ENCODE measurements at regions of chr5 and their contacts with region 1.

Region 1: GRCh38 chr5:180470966-180471582 is 23.1 kb upstream of the CNOT6 start:
- DNase-seq: peak; percentile 59
- ATAC-seq: peak; percentile 98
- H3K4me3 ChIP-seq: no peak overlapping the region
- H3K27ac ChIP-seq: no peak overlapping the region
- H3K4me1 ChIP-seq: no peaks in the 10 kb centered on the region
- H3K27me3 ChIP-seq: peaks cover 11% of the 10 kb centered on the region
- CTCF ChIP-seq: peak; percentile 89
- POLR2A ChIP-seq: no peak
- RAD21 ChIP-seq: peak; percentile 93

Region 2: DNA sequence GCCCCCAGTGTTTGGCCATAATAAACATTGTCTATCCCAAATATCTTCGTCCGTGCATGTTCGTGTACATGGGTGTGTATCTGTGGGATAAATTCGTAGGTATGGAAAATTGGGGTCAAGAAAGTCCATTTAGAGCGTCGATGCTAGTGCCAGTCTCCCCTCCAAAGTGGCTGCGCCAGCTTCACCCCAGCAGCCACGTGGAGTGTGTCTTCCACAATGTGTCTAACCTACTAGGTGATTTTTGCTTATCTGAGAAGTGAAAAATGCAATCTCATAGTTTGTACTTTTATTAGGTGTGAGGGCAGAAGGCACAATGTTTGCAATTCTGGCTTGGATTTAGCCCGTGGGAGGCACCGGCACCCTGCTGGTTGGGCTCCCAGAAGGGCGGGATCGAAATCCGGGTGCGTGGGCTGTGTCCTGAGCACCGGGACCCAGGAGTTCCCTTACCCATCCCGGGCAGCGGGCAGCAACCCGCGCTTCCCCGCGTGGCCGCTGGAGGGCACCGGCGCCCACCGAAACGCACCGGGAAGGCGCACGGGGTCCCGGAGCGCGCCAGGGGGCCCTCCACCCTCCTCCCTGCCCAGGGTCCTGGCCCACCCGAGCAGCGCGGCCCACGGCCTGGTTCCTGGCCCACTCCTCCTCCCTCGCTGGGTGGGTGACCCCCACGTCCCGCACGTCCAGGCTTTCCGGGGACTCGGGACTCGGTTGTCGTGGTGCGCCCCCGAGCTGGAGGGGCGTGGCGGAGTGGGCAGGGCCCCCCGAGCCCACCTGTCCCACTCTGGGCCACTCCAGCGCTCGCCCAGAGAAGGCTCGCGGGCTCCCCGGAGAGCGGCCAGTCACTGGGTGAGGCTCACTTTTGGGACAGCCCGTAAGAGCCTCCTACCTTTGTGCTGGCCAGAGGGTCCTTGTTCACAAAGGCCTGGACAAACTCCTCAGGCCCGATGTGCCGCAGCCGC is 344.1 kb before region 1 on chr5:
- CTCF ChIA-PET with region 1: no interaction called
- POLR2A ChIA-PET with region 1: no interaction called
- dilution Hi-C with region 1: no loop called
- in situ Hi-C with region 1: loop called (anchors 25 kb)
- intact Hi-C with region 1: loop called (anchors 1 kb)
- DNase-seq: no peak
- ATAC-seq: peak; percentile 94
- H3K4me3 ChIP-seq: no peak overlapping the region
- H3K27ac ChIP-seq: no peak overlapping the region
- H3K4me1 ChIP-seq: no peaks in the 10 kb centered on the region; the same call in 1 of the 2 replicates
- H3K27me3 ChIP-seq: peaks cover 24% of the 10 kb centered on the region
- CTCF ChIP-seq: peak; percentile 73
- POLR2A ChIP-seq: no peak
- RAD21 ChIP-seq: peak; percentile 77

Region 3: GRCh38 chr5:180253036-180253824 is 217.8 kb before region 1 on chr5:
- CTCF ChIA-PET with region 1: no interaction called
- POLR2A ChIA-PET with region 1: no interaction called
- dilution Hi-C with region 1: no loop called
- in situ Hi-C with region 1: no loop called
- intact Hi-C with region 1: no loop called
- DNase-seq: no peak
- ATAC-seq: no peak
- H3K4me3 ChIP-seq: no peak overlapping the region
- H3K27ac ChIP-seq: no peak overlapping the region
- H3K4me1 ChIP-seq: no peaks in the 10 kb centered on the region
- H3K27me3 ChIP-seq: no peaks in the 10 kb centered on the region
- CTCF ChIP-seq: no peak
- POLR2A ChIP-seq: no peak
- RAD21 ChIP-seq: no peak

Region 4: DNA sequence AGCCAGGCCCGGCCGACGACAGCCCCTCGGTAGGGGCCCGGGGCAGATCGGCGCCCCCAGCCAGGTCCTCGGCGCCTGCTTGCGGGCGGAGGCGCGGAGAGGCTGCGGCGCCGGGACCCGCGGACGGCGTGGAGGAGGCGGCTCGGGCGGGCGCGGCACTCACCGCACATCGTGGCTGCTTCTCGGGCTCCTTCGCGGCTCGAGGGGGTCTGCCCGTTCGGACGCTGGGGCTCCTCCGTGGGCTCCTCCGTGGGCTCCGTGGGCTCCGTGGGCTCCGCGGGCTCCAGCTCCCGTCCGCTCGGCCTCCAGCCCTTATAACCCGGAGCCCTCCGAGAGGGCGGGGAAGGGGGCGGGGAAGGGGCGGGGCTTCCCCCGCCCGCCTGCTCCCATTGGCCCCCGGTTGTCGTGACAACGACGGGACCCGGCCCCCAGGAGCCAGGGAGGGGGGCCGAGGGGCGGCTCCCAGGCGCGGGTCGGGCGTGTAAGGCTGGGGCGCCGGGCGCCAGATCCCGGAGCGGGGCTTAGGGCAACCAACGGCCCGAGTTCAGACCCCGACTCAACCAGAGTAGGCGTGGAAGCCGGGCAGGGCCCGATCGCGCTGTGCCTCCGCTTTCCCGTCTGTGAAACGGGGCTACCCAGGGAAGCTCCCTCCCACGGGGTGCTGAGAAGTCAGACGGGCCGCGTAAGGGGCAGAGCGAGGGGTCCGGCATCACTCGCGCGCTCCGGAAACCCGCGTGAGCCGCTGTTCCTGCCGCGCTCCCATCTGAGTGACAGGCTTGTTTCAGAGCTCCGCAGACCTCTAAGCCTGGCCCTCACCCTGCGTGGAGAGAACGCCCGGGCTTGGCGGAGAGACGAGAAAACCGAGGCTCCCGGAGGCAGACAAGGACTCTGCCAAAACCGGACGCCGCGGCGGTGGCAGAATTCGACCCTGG is 117.8 kb before region 1 on chr5 and contains the start of gene GFPT2:
- CTCF ChIA-PET with region 1: no interaction called
- POLR2A ChIA-PET with region 1: no interaction called
- dilution Hi-C with region 1: no loop called
- in situ Hi-C with region 1: no loop called
- intact Hi-C with region 1: loop called (anchors 1 kb)
- DNase-seq: peak; percentile 64
- ATAC-seq: peak; percentile 93
- H3K4me3 ChIP-seq: peak within 1 kb of the TSS; percentile 83
- H3K27ac ChIP-seq: no peak within 1 kb of the TSS; the same call in 1 of the 2 replicates
- H3K4me1 ChIP-seq: no peaks in the 10 kb centered on the region; the same call in 1 of the 2 replicates
- H3K27me3 ChIP-seq: peaks cover 13% of the 10 kb centered on the region; the same call in 1 of the 2 replicates
- CTCF ChIP-seq: no peak
- POLR2A ChIP-seq: peak; percentile 93
- RAD21 ChIP-seq: no peak
- total RNA-seq, gene GFPT2: 20.6 and 20.8 TPM in 2 replicates

Region 5: GRCh38 chr5:180605554-180606214 is 134.6 kb after region 1 on chr5:
- CTCF ChIA-PET with region 1: no interaction called
- POLR2A ChIA-PET with region 1: no interaction called
- dilution Hi-C with region 1: no loop called
- in situ Hi-C with region 1: no loop called
- intact Hi-C with region 1: loop called (anchors 5 kb)
- DNase-seq: peak; percentile 51
- ATAC-seq: peak; percentile 73
- H3K4me3 ChIP-seq: no peak overlapping the region
- H3K27ac ChIP-seq: no peak overlapping the region
- H3K4me1 ChIP-seq: no peaks in the 10 kb centered on the region
- H3K27me3 ChIP-seq: peaks cover 10% of the 10 kb centered on the region; the same call in 1 of the 2 replicates
- CTCF ChIP-seq: peak; percentile 56
- POLR2A ChIP-seq: no peak
- RAD21 ChIP-seq: peak; percentile 52

Region 6: DNA sequence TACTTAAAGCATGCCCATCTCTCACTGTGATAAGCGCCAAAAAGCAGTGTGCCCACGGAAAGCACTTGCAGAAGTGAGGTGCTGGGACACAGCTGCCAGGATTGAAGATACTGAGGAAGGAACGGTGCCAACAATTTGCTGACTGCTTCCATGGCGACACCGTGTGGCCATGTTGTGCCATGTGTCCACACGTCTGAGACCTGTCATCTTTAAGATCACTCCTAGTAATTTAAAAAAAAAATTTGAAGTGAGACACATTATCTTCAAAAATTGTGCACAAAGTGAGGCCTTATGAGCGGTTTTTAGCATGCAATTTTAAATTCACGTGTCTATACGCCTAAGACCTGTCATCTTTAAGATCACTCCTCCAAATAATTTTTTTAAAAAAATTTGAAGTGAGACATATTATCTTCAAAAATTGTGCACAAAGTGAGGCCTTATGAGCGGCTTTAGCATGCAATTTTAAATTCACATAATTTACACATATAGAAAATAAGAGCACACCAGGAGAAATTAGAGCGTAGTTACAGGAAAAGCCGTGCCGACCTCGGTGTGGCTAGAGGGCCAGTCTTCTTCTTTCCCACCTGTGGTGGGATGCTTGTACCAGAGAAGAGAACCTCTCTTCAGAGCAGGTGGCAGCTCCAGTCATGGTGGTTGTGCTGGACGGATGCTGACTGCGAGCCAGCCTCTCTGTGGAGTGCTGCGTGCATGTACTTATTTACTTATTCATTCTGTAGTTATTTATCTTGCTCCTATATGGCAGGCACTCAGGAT is 199.7 kb after region 1 on chr5:
- CTCF ChIA-PET with region 1: no interaction called
- POLR2A ChIA-PET with region 1: no interaction called
- dilution Hi-C with region 1: no loop called
- in situ Hi-C with region 1: no loop called
- intact Hi-C with region 1: loop called (anchors 5 kb)
- DNase-seq: peak; percentile 37
- ATAC-seq: peak; percentile 72
- H3K4me3 ChIP-seq: no peak overlapping the region
- H3K27ac ChIP-seq: no peak overlapping the region
- H3K4me1 ChIP-seq: no peaks in the 10 kb centered on the region
- H3K27me3 ChIP-seq: peaks cover 14% of the 10 kb centered on the region
- CTCF ChIP-seq: peak; percentile 41
- POLR2A ChIP-seq: no peak
- RAD21 ChIP-seq: peak; percentile 30; the same call in 1 of the 2 replicates

Region 7: DNA sequence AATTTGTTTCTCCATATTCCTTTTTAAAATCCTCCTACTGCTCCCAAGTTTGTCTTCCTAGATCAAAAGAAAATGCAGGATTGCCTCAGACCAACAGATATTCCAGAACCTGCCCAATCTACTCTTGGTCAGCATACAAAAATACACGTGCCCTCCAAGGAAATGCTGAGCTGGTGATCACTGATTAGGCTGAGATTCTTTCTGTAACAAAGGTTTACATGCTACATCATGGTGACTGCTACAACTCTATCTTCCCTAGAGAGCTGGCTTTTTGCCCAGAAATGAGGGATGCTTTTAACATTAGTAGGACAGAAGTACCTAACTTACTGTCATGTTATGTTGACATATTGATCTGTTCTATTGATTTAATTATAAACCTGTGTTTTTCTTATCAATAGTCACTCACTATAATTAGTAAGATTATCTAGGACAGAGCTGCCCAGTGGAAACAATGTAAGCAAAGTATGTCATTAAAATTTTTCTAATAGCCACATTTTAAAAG is 233.3 kb after region 1 on chr5:
- CTCF ChIA-PET with region 1: no interaction called
- POLR2A ChIA-PET with region 1: no interaction called
- dilution Hi-C with region 1: no loop called
- in situ Hi-C with region 1: no loop called
- intact Hi-C with region 1: no loop called
- DNase-seq: peak; percentile 7
- ATAC-seq: no peak
- H3K4me3 ChIP-seq: no peak overlapping the region
- H3K27ac ChIP-seq: no peak overlapping the region
- H3K4me1 ChIP-seq: no peaks in the 10 kb centered on the region
- H3K27me3 ChIP-seq: no peaks in the 10 kb centered on the region
- CTCF ChIP-seq: no peak
- POLR2A ChIP-seq: no peak
- RAD21 ChIP-seq: no peak

Measured in IMR-90 (cell line).